ENCODE measurements at regions of chr10 and their contacts with region 1.

Region 1: GRCh38 chr10:110803830-110804338 is 67.8 kb upstream of the PDCD4 start:
- DNase-seq: peak; percentile 65
- ATAC-seq: peak; percentile 79
- H3K4me3 Mint-ChIP-seq: no peak overlapping the region
- H3K27ac Mint-ChIP-seq: peak overlapping the region; percentile 68
- H3K4me1 Mint-ChIP-seq: peaks cover 29% of the 10 kb centered on the region
- H3K27me3 Mint-ChIP-seq: no peaks in the 10 kb centered on the region

Region 2: GRCh38 chr10:110774069-110775019 is 29.5 kb before region 1 on chr10:
- CTCF ChIA-PET with region 1: interaction called, 15 read pairs
- DNase-seq: peak; percentile 88
- ATAC-seq: peak; percentile 96
- H3K4me3 Mint-ChIP-seq: peak overlapping the region; percentile 12
- H3K27ac Mint-ChIP-seq: peak overlapping the region; percentile 85
- H3K4me1 Mint-ChIP-seq: peaks cover 29% of the 10 kb centered on the region
- H3K27me3 Mint-ChIP-seq: no peaks in the 10 kb centered on the region

Region 3: DNA sequence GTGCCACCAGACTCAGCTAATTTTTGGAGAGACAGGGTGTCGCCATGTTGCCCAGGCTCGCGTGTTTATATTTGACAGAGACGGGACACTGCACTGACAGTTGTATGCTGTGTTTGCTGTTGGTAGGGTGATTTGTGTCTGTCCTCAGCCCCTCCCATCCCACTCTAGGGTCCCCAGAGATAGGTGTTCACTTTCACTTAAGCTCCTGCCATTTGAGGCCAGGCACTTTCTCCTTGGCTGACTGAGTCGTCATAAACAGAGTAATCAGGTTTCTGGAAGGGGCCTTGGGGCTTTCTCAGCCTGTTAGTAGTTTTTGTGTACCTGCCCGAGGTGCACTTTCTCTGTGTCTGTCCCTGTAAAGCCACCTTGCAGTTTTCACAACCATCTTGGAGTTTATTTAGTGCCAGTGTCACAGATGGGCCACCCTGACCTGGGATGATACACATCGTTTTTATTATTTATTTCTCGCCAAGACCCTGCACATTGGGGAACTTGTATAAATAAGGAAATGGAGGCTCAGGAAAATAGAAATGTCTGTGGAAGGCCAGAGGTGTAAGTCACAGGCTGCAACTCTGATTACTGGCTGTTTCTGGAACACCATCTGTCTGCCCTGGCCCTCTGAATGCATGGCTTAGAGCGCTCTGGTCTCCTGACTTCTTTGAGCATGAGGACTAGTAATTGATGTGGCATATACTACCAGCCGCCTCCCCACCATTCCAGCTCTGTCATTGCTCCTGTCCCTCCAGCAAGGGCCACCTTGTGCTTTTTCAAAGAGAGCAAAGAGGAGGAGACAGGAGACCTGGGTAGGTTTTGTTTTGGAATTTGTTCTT is 14.1 kb before region 1 on chr10:
- CTCF ChIA-PET with region 1: interaction called, 18 read pairs
- DNase-seq: no peak
- ATAC-seq: no peak
- H3K4me3 Mint-ChIP-seq: no peak overlapping the region
- H3K27ac Mint-ChIP-seq: no peak overlapping the region
- H3K4me1 Mint-ChIP-seq: no peaks in the 10 kb centered on the region
- H3K27me3 Mint-ChIP-seq: no peaks in the 10 kb centered on the region

Region 4: GRCh38 chr10:110865809-110866482 is 62.1 kb after region 1 on chr10:
- CTCF ChIA-PET with region 1: interaction called, 20 read pairs
- DNase-seq: no peak
- ATAC-seq: no peak
- H3K4me3 Mint-ChIP-seq: peak overlapping the region; percentile 82
- H3K27ac Mint-ChIP-seq: peak overlapping the region; percentile 99
- H3K4me1 Mint-ChIP-seq: peaks cover 91% of the 10 kb centered on the region
- H3K27me3 Mint-ChIP-seq: no peaks in the 10 kb centered on the region

Region 5: GRCh38 chr10:110883924-110884323 is 80.0 kb after region 1 on chr10:
- CTCF ChIA-PET with region 1: interaction called, 16 read pairs
- DNase-seq: no peak
- ATAC-seq: peak; percentile 67
- H3K4me3 Mint-ChIP-seq: peak overlapping the region; percentile 73
- H3K27ac Mint-ChIP-seq: peak overlapping the region; percentile 83
- H3K4me1 Mint-ChIP-seq: peaks cover 59% of the 10 kb centered on the region
- H3K27me3 Mint-ChIP-seq: no peaks in the 10 kb centered on the region

Region 6: GRCh38 chr10:110957603-110958002 is 153.7 kb after region 1 on chr10:
- CTCF ChIA-PET with region 1: no interaction called
- DNase-seq: no peak
- ATAC-seq: no peak
- H3K4me3 Mint-ChIP-seq: no peak overlapping the region
- H3K27ac Mint-ChIP-seq: no peak overlapping the region
- H3K4me1 Mint-ChIP-seq: peaks cover 4% of the 10 kb centered on the region
- H3K27me3 Mint-ChIP-seq: no peaks in the 10 kb centered on the region

Measured in activated CD8-positive, alpha-beta memory T cell treated with anti-CD3 and anti-CD28 coated beads, Interleukin-2, amount 10 ng/mL, durations not matched to agents 7 days and 5 days (primary cell).